GM12878 (cell line): ENCODE measurements at regions of chr2 and their contacts with region 1.

Region 1: GRCh38 chr2:160075171-160075570 is 12.8 kb upstream of the PLA2R1 start:
- DNase-seq: no peak
- ATAC-seq: no peak
- H3K4me3 ChIP-seq: no peak overlapping the region
- H3K27ac ChIP-seq: no peak overlapping the region
- H3K4me1 ChIP-seq: no peaks in the 10 kb centered on the region
- H3K27me3 ChIP-seq: peaks cover 0 to 2% of the 10 kb centered on the region in 2 experiments; a peak in 1 of 4 replicates
- CTCF ChIP-seq: no peak
- EP300 ChIP-seq: no peak
- POLR2A ChIP-seq: no peak
- RAD21 ChIP-seq: no peak

Region 2: DNA sequence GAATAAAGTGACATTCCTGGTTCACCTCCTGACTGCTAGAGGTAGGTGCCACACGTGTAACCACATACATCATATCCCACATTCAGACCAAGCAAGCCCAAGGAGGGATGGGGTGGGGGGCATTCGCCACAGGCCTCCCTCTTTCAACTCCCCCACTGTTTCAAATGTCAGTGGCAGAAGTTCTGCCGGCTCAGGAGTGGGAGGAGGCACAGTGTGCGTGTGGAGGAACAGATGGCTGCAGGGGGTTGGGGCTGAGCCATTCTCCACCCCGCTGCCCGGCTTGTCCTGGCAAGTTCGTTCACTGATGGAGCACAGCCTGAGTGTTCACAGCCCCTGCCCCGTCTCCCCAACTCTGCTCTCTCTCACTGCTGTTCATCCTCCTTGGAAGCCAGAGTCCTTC is 1182.1 kb before region 1 on chr2:
- CTCF ChIA-PET with region 1: no interaction called
- POLR2A ChIA-PET with region 1: no interaction called
- RAD21 ChIA-PET with region 1: no interaction called
- SMC1A ChIA-PET with region 1: no interaction called
- in situ Hi-C with region 1: no loop called
- intact Hi-C with region 1: no loop called
- DNase-seq: no peak
- ATAC-seq: no peak
- H3K4me3 ChIP-seq: no peak overlapping the region
- H3K27ac ChIP-seq: no peak overlapping the region
- H3K4me1 ChIP-seq: no peaks in the 10 kb centered on the region
- H3K27me3 ChIP-seq: no peaks in the 10 kb centered on the region
- CTCF ChIP-seq: no peak
- EP300 ChIP-seq: no peak
- POLR2A ChIP-seq: no peak
- RAD21 ChIP-seq: no peak

Region 3: GRCh38 chr2:159998961-159999360 is 76.2 kb before region 1 on chr2:
- CTCF ChIA-PET with region 1: no interaction called
- POLR2A ChIA-PET with region 1: no interaction called
- RAD21 ChIA-PET with region 1: no interaction called
- SMC1A ChIA-PET with region 1: no interaction called
- in situ Hi-C with region 1: no loop called
- intact Hi-C with region 1: no loop called
- DNase-seq: no peak
- ATAC-seq: peak; percentile 22; the same call in 1 of the 3 replicates
- H3K4me3 ChIP-seq: no peak overlapping the region
- H3K27ac ChIP-seq: no peak overlapping the region
- H3K4me1 ChIP-seq: no peaks in the 10 kb centered on the region
- H3K27me3 ChIP-seq: no peaks in the 10 kb centered on the region
- CTCF ChIP-seq: no peak
- EP300 ChIP-seq: no peak
- POLR2A ChIP-seq: no peak
- RAD21 ChIP-seq: no peak

Region 4: DNA sequence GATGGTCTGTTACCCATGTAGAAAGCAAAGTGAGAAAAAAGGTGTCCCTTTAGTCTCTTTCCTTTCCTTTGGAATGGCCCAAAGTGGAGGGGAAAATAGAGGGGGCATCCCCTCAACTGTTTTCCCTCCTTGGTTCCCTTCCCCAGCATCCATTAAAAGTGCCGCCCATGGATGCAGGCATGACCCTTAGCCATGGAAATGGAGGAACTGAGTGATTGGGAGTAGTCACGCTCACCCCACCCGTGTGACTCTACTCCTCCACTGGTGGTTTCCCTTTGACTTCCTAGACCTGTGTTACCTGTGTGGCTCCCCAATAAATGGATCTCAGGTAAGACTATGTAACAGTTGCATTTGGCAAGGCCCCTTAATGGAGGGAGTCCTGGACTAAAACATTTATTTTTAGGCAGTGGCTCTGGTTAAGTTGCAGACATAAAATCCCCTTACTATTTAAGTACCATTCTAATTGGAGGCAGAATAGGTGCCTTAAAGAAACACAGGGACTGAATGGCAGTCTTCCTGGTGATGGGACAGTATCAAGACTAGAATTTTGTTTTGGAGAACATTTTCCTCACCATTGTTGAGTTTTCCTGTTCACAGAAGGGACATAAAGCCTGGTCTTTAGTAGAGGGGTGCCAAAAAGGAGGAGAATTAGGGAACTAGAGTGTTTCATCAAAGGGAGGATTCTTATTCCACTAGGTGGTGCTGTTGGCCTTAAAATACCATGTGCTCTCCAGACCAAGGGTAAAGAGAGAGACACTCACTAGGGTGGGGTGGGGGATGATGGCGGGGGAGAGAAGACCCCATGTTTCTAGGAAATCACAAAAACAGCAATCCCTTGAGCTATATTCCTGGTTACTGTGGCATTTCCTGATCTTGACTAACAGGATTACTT is 12.9 kb after region 1 on chr2:
- CTCF ChIA-PET with region 1: interaction called, 5 read pairs
- POLR2A ChIA-PET with region 1: no interaction called
- RAD21 ChIA-PET with region 1: interaction called, 3 read pairs
- SMC1A ChIA-PET with region 1: interaction called, 16 read pairs
- in situ Hi-C with region 1: no loop called
- intact Hi-C with region 1: no loop called
- DNase-seq: no peak
- ATAC-seq: peak; percentile 82
- H3K4me3 ChIP-seq: no peak overlapping the region
- H3K27ac ChIP-seq: no peak overlapping the region
- H3K4me1 ChIP-seq: no peaks in the 10 kb centered on the region
- H3K27me3 ChIP-seq: no peaks in the 10 kb centered on the region
- CTCF ChIP-seq: peak; percentile 20 to 30 (median 21); a peak in 3 of 6 replicates
- EP300 ChIP-seq: no peak
- POLR2A ChIP-seq: no peak
- RAD21 ChIP-seq: peak; percentile 59